ENCODE measurements at regions of chr1 and their contacts with region 1.

Region 1: DNA sequence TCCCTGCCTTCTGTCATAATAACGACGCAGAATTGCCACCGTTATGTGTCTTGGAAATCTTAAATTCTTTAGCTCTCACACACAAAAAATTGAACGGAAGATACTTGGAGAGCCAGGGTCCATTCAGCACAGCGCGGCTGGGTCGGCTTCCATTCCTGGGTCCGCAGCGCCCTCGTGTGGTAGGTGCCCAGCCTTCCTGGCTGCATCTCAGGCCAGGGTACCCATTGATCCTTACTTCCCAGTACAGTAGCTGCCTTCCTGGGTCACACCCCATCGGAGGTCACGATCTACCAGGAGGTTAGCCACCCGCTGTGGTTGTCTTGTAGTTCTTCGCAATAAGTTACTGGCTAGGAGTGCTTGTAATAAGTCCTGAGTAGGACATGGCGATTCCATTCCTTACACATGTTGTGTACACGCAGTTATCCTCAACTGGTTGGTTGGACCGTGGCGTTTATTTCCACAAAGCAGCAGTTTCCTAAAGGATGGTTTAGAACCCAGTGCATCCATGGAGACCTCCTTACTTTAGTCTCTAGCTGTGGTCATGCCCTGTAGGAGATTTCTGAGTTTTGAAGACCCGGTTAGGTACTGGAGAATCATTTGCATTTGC is 9.9 kb upstream of the MTARC1 start:
- DNase-seq: peak; percentile 75
- CTCF ChIP-seq: peak; percentile 93

Region 2: GRCh38 chr1:220281159-220281574 is 495.7 kb before region 1 on chr1:
- CTCF ChIA-PET with region 1: interaction called, 16 read pairs
- POLR2A ChIA-PET with region 1: no interaction called
- DNase-seq: no peak
- CTCF ChIP-seq: peak; percentile 12

Region 3: DNA sequence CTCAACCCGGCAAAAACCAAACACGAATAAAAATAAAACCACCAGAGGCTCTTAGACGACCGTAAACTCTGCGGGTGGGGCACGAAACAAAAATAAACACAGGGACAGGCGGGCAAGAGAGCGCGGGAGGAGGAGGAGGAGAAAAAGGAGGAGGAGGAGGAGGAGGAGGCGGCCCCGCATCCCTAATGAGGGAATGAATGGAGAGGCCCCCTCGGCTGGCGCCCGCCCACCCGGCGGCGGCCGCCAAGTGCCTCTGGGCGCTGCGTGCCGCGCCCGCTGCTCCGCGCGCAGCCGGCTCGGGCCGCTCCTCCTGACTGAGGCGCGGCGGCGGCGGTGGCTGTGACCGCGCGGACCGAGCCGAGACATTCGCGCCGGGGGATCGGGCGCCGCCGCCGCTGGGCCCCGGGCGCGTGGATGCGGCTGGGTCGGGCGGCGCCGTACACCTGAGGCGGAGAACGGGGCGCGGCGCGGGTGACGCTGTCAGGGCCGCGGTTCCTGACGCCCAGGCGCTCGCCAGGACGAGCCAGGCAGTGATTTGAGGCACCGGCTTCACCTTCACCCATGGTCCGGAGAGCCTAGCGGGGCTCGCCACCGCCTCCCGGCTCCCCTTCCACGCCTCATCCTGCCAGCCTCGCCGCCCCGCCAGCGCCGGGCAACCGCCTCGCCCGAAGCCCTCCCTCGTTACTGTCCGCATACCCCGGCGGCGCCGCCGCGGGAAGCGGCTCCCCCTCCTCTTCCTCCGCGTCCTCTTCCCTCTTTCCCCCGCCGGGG is 248.7 kb before region 1 on chr1 and contains the start of gene MARK1:
- CTCF ChIA-PET with region 1: no interaction called
- POLR2A ChIA-PET with region 1: no interaction called
- DNase-seq: peak; percentile 56
- CTCF ChIP-seq: no peak

Region 4: DNA sequence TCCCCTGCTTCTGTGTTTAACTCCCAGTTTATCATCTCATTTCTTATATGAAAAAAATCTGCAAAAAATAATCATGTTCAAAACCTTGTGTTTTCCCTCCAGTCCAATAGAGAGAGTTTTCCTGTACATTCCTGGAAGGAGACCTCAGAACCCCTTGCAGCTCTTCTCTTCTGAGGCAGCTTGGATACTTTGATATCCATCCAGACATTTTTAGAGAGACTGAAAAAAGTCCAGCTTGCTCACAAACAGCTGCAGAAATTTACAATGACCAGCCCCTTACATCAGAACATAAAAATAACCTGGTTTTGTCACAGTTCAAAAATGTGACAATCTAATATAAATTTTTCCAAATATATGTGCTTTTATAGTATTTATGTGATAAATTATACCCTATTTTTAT is 160.0 kb before region 1 on chr1:
- CTCF ChIA-PET with region 1: no interaction called
- POLR2A ChIA-PET with region 1: no interaction called
- DNase-seq: no peak
- CTCF ChIP-seq: no peak

Region 5: GRCh38 chr1:220755309-220755708 is 21.5 kb before region 1 on chr1:
- CTCF ChIA-PET with region 1: interaction called, 27 read pairs
- POLR2A ChIA-PET with region 1: no interaction called
- DNase-seq: peak; percentile 3
- CTCF ChIP-seq: no peak

Region 6: DNA sequence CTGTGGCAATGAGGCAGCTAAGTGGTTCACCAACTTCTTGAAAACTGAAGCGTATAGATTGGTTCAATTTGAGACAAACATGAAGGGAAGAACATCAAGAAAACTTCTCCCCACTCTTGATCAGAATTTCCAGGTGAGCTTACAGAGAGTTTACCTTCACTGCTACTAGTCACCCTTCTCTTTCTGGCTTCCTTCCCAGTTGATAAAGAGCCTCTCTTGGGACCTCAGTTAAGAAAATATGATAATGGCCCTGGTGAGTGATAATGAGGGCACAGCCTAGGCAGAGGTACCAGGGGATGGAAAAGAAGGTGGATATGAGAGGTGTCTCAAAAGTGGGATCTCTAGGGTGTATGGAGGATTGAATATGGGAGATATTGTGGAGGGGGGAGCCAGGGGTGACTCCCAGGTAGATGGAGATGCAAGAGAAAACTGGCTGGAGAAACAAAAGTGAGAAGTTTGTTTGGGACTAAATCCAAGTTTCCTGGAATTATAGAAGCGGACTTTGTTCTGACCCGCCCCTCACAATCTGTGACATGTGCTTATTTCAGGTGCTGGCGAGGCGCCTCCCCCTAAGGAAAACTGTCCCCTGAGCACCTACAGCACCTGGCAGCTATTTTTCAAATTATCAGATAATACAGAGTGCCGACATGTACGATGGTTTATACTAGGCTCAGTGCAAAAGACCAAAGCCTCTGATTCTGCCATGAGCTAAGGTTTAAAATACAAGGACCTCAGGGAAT is 15.0 kb before region 1 on chr1:
- CTCF ChIA-PET with region 1: interaction called, 48 read pairs
- POLR2A ChIA-PET with region 1: no interaction called
- DNase-seq: no peak
- CTCF ChIP-seq: no peak